Pancreas (tissue), 10 donors: ENCODE measurements at regions of chr6 and their contacts with region 1.

Region 1: GRCh38 chr6:52016915-52017748 is 70.3 kb downstream of the PKHD1 start:
- DNase-seq: peak in 1 of 6 donors; percentile 9
- ATAC-seq: peak in 2 of 4 donors; percentile 31 to 54
- H3K4me3 ChIP-seq: no peak overlapping the region
- H3K27ac ChIP-seq: no peak overlapping the region
- H3K4me1 ChIP-seq: no peaks in the 10 kb centered on the region
- H3K27me3 ChIP-seq: no peaks in the 10 kb centered on the region
- CTCF ChIP-seq: no peak

Region 2: GRCh38 chr6:51855310-51856082 is 161.6 kb before region 1 on chr6:
- intact Hi-C with region 1: loop called in 1 of 3 experiments (anchors 10 kb)
- DNase-seq: peak in 1 of 6 donors; percentile 27
- ATAC-seq: peak in 3 of 4 donors; percentile 63 to 75 (median 66)
- H3K4me3 ChIP-seq: no peak overlapping the region
- H3K27ac ChIP-seq: no peak overlapping the region
- H3K4me1 ChIP-seq: peaks cover 0 to 6% (median 2%) of the 10 kb centered on the region in 3 donors
- H3K27me3 ChIP-seq: no peaks in the 10 kb centered on the region
- CTCF ChIP-seq: peak; percentile 55 to 76 (median 59)

Region 3: GRCh38 chr6:51936531-51936930 is 80.6 kb before region 1 on chr6:
- intact Hi-C with region 1: no loop called
- DNase-seq: no peak
- ATAC-seq: peak in 1 of 4 donors; percentile 52
- H3K4me3 ChIP-seq: no peak overlapping the region
- H3K27ac ChIP-seq: peak overlapping the region in 1 of 4 donors; percentile 22
- H3K4me1 ChIP-seq: no peaks in the 10 kb centered on the region
- H3K27me3 ChIP-seq: no peaks in the 10 kb centered on the region
- CTCF ChIP-seq: no peak